WTC11 (cell line): ENCODE measurements at regions of chr1 and their contacts with region 1.

Region 1: DNA sequence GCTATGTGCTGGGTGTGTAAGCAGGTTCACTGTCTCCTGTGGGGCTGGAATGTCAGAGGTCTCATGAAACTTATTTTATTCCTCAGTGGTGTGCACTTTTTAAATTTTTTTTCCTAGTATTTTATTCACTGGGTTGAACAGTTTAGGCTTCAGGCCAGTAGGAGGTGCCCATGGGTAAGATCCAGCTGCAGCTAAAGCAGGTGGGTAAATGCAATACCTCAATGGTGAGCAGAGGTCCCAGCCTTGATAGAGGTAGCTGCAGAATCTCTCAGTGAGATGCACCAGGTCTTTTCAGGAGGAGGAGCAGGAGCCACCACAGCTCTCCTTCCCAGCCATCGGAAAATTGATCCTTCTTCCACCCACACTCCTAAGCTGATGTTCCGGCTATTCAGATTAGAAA is 12.6 kb upstream of the OR6N2 start:
- DNase-seq: peak; percentile 58
- ATAC-seq: peak; percentile 95
- H3K4me3 Mint-ChIP-seq: no peak overlapping the region
- H3K27ac Mint-ChIP-seq: no peak overlapping the region
- H3K4me1 Mint-ChIP-seq: peaks cover 12% of the 10 kb centered on the region
- H3K27me3 Mint-ChIP-seq: no peaks in the 10 kb centered on the region
- CTCF ChIP-seq: peak; percentile 38; the same call in 1 of the 2 replicates

Region 2: GRCh38 chr1:158962983-158963382 is 169.4 kb after region 1 on chr1:
- CTCF ChIA-PET with region 1: interaction called, 11 read pairs
- POLR2A ChIA-PET with region 1: no interaction called
- DNase-seq: no peak
- ATAC-seq: peak; percentile 82
- H3K4me3 Mint-ChIP-seq: no peak overlapping the region
- H3K27ac Mint-ChIP-seq: no peak overlapping the region
- H3K4me1 Mint-ChIP-seq: no peaks in the 10 kb centered on the region
- H3K27me3 Mint-ChIP-seq: peaks cover 5% of the 10 kb centered on the region
- CTCF ChIP-seq: no peak

Region 3: GRCh38 chr1:158998781-158999161 is 205.2 kb after region 1 on chr1:
- CTCF ChIA-PET with region 1: interaction called, 12 read pairs
- POLR2A ChIA-PET with region 1: interaction called, 6 read pairs
- DNase-seq: no peak
- ATAC-seq: no peak
- H3K4me3 Mint-ChIP-seq: peak overlapping the region; percentile 74
- H3K27ac Mint-ChIP-seq: no peak overlapping the region
- H3K4me1 Mint-ChIP-seq: peaks cover 26% of the 10 kb centered on the region
- H3K27me3 Mint-ChIP-seq: peaks cover 2% of the 10 kb centered on the region
- CTCF ChIP-seq: peak; percentile 93

Region 4: GRCh38 chr1:159071970-159072582 is 278.5 kb after region 1 on chr1:
- CTCF ChIA-PET with region 1: interaction called, 10 read pairs
- POLR2A ChIA-PET with region 1: no interaction called
- DNase-seq: no peak
- ATAC-seq: peak; percentile 74
- H3K4me3 Mint-ChIP-seq: no peak overlapping the region
- H3K27ac Mint-ChIP-seq: peak overlapping the region; percentile 38; the same call in 1 of the 2 replicates
- H3K4me1 Mint-ChIP-seq: peaks cover 12% of the 10 kb centered on the region
- H3K27me3 Mint-ChIP-seq: no peaks in the 10 kb centered on the region
- CTCF ChIP-seq: peak; percentile 66